ENCODE measurements at regions of chr11 and their contacts with region 1.

Region 1: DNA sequence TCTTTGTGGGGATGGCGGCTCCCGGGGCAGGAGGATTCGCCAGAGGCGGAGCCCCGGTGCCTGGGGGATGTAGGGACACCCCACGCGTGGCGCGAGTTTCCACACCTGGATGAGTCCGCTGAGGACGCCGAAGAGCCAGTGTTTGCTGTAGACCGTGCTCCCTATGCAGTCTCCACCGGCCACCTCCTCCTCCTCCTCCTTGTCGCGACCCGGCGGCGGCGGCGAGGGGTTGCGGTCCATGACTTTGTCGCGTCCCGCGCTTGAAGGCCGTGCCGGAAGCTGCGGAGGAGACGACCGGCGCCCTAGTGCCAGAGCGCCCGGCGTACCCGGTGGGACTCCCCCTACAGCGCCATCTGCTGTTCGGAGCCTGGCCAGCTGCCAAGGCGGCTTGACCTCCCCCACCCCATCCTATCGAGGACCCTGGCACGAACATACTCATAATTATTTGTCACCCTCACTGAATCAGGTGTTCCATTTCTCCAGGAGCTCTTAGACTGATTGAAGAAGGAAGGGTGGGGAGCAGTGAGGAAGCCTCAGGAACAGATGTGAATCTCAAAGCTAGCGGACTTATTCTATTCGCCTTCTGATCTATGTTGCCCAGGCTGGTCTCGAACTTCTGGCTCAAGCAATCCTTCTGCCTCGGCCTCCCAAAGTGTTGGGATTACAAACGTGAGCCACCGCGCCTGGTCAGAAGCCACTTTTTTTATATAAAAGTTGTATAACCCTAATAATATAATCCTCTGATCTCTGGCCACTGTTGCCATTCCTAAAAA is at the start of gene SAAL1:
- DNase-seq: peak; percentile 81 to 91
- ATAC-seq: peak; percentile 99
- total RNA-seq, gene SAAL1: 10.3 to 10.6 TPM

Region 2: DNA sequence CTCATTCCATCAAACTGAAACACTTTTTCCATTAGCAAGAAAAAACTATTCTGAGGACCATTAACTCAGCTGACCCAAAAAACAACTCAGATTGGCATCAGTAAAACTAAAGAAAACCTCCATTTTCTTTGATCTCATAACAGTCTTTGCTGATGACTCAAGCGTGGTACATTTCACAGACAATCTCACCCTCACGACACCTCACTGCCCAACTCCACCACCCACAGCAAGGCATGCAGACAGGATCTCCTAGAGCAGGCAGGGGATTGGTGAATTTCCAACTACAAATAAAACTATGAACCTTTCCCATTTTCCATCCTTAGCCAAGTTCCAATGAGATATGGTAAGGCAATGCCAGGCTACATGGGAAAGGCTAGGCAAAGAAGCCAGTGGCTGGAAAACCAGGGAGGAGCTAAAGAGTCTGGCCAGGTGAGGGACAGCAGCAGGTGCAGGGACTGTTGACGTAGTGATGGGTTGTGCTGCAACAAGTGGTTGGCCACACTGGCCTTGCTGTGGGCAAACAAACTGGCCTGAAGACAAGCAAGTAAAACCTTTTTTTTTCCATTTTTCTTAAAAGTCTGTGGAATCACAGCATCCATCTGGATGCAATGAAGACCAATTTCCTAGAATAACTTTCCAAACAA is 190.4 kb before region 1 on chr11:
- intact Hi-C with region 1: no loop called
- DNase-seq: no peak
- ATAC-seq: no peak

Region 3: DNA sequence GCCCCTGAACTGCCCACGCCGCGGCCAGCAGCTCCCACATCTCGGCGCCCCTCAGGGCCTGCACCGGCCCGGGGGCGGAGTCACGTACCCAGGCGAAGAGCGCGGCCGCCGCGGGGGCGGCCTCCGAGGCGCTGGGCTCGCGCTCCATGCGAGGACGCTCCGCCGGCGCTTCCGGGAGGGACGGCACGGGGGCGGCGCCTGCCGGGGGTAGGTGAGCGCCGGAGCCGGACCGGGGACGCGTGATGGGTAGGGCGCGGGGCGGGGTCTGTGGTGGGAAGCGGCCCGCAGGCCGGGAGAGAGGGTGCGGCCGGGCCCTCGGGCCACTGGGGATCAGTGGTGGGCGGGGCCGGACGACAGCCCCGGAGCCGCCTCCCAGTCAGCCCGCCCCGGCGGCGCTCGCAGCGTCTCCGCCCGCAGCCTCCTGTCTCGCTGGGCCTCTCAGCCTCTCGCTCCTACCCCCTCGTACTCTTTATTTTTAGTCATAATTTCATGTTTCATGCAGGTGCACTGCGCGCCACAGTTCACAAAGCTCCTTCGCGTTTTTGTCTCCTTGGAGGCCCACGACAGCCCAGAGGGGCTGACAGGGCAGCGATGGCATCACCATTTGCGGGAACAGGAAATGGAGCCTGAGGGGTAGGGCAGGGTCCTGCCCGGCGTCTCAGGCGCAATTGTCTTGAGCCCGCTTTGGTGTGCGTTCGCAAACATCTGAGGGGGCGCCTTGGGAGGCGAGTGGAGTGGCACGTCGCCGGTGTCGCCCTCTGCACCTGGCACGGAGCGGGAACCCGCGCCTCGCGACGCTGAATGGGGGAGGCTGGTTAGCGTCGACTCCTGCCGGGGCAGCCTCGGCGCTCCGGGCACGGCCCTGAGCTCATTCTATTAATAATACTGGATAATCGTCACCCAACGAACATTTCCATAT is 92.9 kb before region 1 on chr11 and contains the start of gene SERGEF:
- intact Hi-C with region 1: loop called in 1 of 2 experiments (anchors 10 kb)
- DNase-seq: peak; percentile 97 to 98
- ATAC-seq: peak; percentile 97
- total RNA-seq, gene SERGEF: 28.6 to 30.6 TPM

Region 4: DNA sequence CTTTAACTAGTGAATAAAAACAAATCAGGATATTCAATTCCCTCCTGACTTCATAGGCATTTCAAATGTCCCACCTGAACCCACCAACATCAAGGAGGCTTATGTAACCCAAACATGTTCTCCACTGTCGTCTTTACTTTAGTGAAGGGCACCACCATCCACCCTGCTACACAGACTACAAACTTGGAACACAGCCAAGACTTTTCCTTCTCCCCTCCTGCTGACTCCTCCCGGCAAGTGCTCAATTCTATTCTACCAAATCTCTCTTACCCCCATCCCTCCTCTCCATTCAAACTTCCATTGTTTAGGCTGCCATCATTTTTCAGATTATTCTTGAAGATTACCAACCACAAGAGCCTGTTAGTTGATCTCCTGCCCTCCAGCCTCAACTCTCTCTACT is 24.4 kb before region 1 on chr11:
- intact Hi-C with region 1: no loop called
- DNase-seq: no peak
- ATAC-seq: no peak

Measured in left colon (tissue), 2 donors.